Breast epithelium (tissue), 4 donors: ENCODE measurements at regions of chr6 and their contacts with region 1.

Region 1: GRCh38 chr6:99270826-99271225 is 78.6 kb downstream of the FAXC start:
- DNase-seq: no peak
- H3K4me3 ChIP-seq: no peak overlapping the region
- H3K27ac ChIP-seq: no peak overlapping the region
- H3K4me1 ChIP-seq: no peaks in the 10 kb centered on the region
- H3K27me3 ChIP-seq: no peaks in the 10 kb centered on the region
- CTCF ChIP-seq: no peak
- POLR2A ChIP-seq: no peak

Region 2: DNA sequence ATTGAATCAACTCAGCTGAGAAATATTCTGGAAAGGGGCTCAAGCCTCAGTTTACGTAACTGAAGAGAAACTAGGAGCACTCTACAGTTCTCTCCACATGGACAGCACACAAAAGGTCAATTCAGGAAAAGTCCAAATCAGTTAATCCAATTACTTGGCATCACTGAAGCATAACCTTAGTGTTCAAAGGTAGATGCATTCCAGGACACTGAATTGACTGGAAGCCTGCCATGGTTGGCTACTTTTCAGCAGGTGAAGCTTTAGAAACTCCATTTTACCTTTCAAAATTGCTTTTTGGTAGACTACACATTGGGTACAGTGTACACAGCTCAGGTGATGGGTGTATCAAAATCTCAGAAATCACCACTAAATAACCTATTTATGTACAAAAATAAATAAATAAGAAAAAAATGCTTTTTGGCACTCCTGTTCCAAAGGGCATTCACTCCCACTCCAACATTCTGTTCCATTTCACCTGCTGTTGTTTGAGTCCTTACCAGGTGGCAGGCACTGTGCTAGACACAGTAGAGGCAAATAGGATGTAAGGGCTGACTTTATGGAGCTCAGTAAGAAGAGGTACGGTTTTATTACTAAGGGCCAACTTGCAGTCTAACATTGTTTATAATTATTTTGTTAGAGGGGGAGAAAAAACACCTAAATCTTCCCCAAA is 74.7 kb before region 1 on chr6:
- intact Hi-C with region 1: loop called (anchors 2 kb)
- DNase-seq: no peak
- H3K4me3 ChIP-seq: no peak overlapping the region
- H3K27ac ChIP-seq: no peak overlapping the region
- H3K4me1 ChIP-seq: no peaks in the 10 kb centered on the region
- H3K27me3 ChIP-seq: no peaks in the 10 kb centered on the region
- CTCF ChIP-seq: no peak
- POLR2A ChIP-seq: no peak